Activated T-helper 1 cell treated with anti-CD3 and anti-CD28 coated beads, Interleukin-12 subunit alpha, Interleukin-12 subunit beta, Interleukin-2, Interleukin-4 antibody, amounts not matched to agents 30 ng/mL and 10 ng/mL and 1 ng/mL, durations not matched to agents 14 hours and 24 hours and 36 hours (primary cell): ENCODE measurements at regions of chr14 and their contacts with region 1.

Region 1: DNA sequence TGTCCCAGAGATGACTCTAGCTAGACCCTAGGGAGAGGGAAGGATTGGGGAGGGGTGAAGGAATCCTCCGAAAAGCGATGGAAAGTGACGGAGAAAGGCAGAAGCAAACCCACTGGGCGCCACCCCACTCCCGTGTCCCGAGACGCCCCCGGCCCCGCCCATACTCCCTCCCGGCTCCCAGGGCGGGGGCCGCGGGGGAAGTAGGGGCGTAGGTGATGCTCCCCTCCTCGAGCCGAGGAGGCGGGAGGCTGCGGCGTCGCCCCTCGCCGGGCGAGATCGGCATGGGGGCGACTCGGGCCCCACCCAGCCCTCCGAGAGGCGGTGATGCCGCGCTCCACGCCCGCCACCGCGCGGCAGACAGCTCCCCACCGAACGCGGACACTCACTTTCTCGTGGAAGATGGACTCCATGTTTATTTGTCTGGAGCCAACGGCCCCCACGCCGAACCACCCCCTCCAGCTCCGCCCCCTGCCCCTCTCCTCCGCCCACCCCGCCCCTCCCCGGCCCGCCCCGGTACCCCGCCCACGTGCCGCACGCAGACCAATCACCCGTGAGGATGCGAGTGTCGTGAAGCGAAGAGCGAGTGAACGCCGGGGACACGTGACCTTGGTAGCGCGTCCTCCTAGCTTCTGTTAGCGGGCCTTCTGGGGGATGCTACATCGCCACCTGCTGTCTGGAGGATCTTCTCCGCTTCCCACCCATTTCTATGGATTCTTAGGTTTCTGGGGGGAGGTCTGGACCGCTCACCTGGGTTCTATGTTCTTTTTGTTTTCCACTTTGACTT is at the start of gene ATXN3:
- DNase-seq: peak; percentile 93
- H3K4me3 Mint-ChIP-seq: peak within 1 kb of the TSS; percentile 99
- H3K27ac Mint-ChIP-seq: peak within 1 kb of the TSS; percentile 97
- H3K4me1 Mint-ChIP-seq: peaks cover 42% of the 10 kb centered on the region
- H3K27me3 Mint-ChIP-seq: no peaks in the 10 kb centered on the region
- total RNA-seq, gene ATXN3: 27.3 and 27.5 TPM in 2 replicates

Region 2: GRCh38 chr14:90827916-90828610 is 1278.3 kb before region 1 on chr14:
- intact Hi-C with region 1: loop called (anchors 5 kb)
- DNase-seq: peak; percentile 91
- H3K4me3 Mint-ChIP-seq: peak overlapping the region; percentile 76
- H3K27ac Mint-ChIP-seq: peak overlapping the region; percentile 88
- H3K4me1 Mint-ChIP-seq: peaks cover 28% of the 10 kb centered on the region
- H3K27me3 Mint-ChIP-seq: peaks cover 5% of the 10 kb centered on the region

Region 3: DNA sequence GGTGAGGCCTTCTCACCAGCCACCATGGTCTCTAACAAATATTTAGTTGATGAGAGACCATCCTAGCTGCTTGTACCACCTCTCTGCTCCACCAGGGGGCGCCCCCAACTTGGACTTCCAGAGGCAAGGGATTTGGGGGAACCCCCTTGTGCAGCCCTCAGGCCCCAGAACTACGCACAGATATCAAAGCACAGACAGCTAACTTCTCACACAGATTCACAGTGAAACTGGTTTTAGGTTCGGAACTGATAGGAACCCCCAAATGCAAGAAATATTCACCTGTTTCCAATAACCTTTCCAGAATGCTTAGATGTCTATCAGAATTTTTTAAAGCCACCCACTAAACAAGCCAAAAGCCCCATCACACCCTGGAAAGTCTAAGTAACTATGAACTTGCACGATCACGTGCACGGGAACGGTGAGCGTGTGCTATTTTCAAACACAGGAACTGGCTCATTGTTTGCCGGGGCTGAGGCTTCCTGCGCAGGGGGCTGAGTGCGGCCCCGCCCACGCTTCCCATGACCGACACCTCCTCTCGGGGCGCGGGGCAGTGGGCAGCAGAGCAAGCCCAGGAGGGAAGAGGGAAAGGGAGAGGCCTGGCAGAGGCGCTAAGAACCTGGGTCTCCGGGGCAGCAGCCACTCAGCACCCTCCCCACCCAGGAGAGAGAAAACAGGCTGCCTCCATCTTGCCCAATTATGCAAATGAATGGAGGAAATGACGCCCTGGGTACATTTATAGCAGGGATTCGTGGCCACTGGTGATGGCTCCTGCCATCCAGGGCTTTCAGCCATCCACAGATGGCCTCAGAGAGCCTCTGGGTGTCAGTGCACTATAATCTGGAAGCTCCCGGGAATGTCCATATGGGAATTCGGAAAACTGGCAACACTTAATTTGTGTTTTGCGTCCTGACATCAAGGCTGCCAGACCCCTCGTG is 782.4 kb before region 1 on chr14:
- intact Hi-C with region 1: loop called (anchors 10 kb)
- DNase-seq: peak; percentile 84
- H3K4me3 Mint-ChIP-seq: peak overlapping the region; percentile 80
- H3K27ac Mint-ChIP-seq: peak overlapping the region; percentile 99
- H3K4me1 Mint-ChIP-seq: peaks cover 59% of the 10 kb centered on the region
- H3K27me3 Mint-ChIP-seq: no peaks in the 10 kb centered on the region

Region 4: DNA sequence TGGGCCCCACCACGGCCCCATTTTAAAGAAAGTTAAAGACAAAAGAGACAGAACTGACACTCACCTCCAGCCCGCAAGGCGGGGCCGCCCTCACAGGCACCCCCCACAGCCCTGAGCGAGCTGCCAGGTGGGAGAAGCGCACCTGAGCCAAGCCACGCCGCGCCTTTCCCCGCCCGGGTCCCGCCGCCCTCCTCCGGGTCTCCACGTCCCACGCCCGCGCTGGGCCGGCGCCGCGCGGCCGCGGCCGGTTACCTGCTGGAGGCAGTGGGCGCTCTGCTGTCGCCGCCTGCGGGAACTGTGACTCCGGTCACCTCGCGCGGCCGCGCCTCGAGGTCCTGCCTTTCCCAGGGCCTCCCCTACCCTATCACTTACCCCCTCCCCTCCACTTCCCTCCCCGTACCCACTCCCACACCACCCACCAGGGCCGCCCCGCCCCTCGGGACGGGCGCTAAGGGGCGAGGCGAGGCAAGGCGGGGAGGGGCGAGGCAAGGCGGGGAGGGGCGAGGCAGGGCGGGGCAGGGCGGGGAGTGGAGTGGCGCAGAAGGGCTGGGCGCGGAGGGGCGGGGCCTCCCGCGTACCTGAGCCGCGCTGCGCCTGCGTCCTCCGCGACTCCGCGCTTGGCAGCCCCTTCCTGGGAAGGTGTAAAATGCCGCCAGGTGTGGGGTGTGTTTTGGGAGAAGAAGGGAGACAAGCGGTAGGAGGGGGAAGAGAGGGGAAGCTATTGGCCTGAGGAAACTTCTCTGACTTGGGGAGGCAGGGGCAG is 270.0 kb before region 1 on chr14:
- intact Hi-C with region 1: loop called (anchors 5 kb)
- DNase-seq: peak; percentile 49
- H3K4me3 Mint-ChIP-seq: peak overlapping the region; percentile 85
- H3K27ac Mint-ChIP-seq: no peak overlapping the region
- H3K4me1 Mint-ChIP-seq: peaks cover 67% of the 10 kb centered on the region
- H3K27me3 Mint-ChIP-seq: no peaks in the 10 kb centered on the region

Region 5: DNA sequence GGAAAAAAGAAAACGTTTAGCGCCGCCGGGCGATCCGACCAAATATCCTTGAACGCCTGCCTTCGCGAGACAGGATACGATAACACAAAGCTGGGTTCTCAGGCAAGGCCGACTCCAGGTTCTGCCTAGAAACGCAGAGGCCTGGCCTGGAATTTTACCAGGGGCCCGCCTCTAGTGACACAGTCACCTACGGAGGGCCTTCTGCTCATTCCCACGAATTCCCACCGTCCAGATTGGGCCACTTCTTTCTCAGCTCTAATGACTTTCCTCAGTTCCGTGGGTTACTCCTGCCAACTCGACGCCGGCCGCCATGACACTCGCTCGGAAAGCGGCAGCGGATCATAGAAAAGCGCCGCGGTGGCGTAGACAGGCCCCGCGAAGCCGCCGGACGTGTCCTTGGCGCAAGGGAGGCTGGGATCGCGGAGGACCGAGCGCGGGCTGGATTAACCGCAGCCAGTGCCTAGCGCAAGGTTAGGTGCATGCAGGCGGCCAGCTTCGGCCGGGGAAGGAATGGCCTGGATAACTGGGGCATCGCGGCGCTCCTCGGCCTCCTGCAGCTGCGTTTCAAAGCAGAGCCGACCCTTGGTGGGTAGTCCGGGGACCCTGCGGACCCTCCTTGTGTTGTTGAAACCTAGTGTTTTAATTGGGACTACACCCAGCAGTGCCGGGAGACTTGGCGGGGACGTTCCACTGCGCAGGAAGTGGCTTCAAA is 66.5 kb before region 1 on chr14 and contains the start of gene TRIP11:
- intact Hi-C with region 1: loop called (anchors 1 kb)
- DNase-seq: peak; percentile 94
- H3K4me3 Mint-ChIP-seq: peak within 1 kb of the TSS; percentile 93
- H3K27ac Mint-ChIP-seq: peak within 1 kb of the TSS; percentile 98
- H3K4me1 Mint-ChIP-seq: peaks cover 38% of the 10 kb centered on the region
- H3K27me3 Mint-ChIP-seq: no peaks in the 10 kb centered on the region
- total RNA-seq, gene TRIP11: 36.5 and 44.4 TPM in 2 replicates

Region 6: DNA sequence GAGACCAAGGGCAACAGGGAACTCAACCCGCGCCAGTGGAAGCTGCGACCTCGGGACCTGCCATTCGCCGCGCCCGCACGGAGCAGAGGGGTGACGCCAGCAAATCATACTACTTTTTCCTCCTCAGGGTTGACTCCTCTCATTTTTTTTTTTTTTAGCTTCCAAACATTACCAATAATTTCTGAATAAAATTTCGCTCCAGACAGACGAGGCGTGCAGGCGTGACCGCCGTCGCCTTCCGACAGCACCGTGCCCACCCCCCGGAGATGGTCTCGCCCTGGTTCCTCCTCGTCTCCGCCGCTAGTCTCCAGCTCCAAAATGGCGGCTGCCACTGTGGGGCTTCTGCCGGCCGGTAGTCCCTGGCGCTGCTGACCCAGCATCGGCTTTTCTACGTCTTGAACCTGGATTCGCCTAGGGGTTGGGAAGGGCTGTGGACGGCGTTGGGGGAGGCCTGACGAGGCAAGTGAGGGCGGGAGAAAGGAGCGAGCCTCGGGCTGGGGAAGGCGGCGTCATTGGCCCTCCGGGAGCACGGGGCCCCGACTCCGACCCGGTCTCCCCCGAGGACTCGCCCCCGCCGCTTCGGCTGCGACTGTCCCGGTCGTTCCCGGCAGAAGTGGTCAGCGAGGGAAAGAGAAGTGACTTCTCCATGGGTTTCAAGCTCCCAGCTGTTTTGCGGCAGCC is 15.5 kb after region 1 on chr14 and contains the starts of genes CPSF2 and NDUFB1:
- intact Hi-C with region 1: loop called (anchors 1 kb)
- DNase-seq: peak; percentile 80
- H3K4me3 Mint-ChIP-seq: peak within 1 kb of the TSS; percentile 97
- H3K27ac Mint-ChIP-seq: peak within 1 kb of the TSS; percentile 100
- H3K4me1 Mint-ChIP-seq: peaks cover 29% of the 10 kb centered on the region
- H3K27me3 Mint-ChIP-seq: no peaks in the 10 kb centered on the region
- total RNA-seq, gene CPSF2: 103 and 104 TPM in 2 replicates
- total RNA-seq, gene NDUFB1: 73.3 and 83.5 TPM in 2 replicates

Region 7: DNA sequence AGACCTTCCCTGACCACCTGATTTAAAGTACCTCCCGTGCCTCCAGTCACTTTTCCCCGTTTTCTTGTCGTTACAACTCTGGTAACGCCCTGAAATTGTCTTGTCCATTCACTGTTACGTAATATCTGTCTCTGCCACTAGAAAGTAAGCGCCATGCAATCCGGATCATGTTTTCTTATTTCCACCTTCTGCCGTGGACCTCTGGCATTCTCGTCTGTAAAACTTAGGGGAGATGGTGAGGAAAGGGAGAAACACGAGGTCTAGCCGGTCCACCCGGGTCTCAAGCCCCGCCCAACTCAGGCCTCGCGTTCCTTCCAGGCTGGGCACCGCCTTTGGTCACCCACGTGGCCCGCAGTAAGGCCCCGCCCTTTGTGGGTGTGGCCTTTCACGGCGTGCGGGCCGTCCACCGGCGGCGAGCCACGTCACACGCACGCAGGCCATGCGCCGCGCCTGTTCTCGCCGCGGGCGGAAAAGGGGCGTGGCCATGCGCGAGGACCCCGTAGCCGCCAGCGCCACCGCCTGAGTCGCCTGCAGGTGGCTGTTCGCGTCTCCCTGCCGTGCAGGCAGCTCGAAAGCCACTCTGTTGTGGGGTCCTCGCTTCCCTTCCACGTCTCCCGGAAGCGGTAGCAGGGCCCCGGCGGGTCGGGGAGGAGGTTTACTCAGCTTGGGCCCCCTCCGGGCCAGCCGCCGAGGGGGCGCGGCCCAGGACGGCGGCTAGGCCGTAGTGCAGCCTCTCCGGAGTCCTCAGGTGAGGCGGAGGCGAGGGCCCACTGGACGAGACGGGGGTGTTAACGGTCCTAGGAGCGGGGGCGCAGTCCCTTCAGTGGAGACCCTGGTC is 687.6 kb after region 1 on chr14 and contains the start of gene GOLGA5:
- intact Hi-C with region 1: loop called (anchors 1 kb)
- DNase-seq: peak; percentile 98
- H3K4me3 Mint-ChIP-seq: peak within 1 kb of the TSS; percentile 99
- H3K27ac Mint-ChIP-seq: peak within 1 kb of the TSS; percentile 98
- H3K4me1 Mint-ChIP-seq: peaks cover 30% of the 10 kb centered on the region
- H3K27me3 Mint-ChIP-seq: no peaks in the 10 kb centered on the region
- total RNA-seq, gene GOLGA5: 22.2 and 22.6 TPM in 2 replicates